PC-9 (cell line): ENCODE measurements at regions of chr6 and their contacts with region 1.

Region 1: DNA sequence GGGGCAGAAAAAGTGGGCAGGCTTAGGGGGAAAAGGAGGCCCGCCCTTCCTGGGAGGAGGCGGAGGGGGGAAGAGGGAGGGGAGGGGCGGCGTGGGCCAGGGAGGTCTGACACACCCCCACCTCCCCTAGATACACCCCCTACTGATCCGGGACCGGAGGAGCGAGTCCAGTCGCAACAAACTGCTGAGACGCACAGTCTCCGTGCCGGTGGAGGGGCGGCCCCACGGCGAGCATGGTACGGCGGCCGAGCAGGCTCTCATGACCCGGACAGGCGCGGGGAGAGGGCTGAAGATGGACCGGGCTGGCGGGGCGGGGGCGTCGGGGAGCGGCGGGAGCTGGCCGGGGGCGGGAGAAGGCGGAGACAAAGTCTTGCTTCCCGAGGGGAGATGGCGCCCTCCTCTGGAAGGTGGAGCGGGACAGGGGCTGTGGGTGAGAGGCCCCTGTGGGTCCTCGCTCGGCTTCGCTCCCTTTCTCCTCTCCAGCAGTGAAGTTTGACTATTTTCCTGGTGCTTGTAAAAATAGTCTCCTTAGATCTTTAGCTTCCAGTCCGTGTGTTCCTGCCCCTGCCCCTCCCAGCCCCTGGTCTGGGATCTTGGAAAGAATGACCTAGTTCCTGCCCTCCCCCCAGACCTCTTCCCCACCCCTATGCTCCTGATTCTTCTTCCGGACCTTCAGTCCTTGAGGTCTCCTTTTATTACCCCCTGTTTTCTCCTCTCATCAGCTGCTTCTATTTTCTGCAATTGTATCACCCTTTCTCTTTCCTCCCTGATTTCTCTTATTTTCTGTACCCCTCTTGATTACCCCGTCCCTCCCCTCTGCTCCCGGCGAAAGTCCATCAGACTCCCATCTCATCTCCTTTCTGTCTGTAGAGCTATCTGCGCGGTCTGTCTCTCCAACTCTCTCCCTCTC is 6.1 kb downstream of the SYNGAP1 start:
- DNase-seq: peak; percentile 66 to 87
- H3K4me3 ChIP-seq: peak overlapping the region; percentile 71
- H3K27ac ChIP-seq: peak overlapping the region; percentile 57
- H3K4me1 ChIP-seq: peaks cover 19% of the 10 kb centered on the region
- H3K27me3 ChIP-seq: peaks cover 21% of the 10 kb centered on the region
- CTCF ChIP-seq: peak; percentile 71

Region 2: GRCh38 chr6:33235221-33235634 is 190.7 kb before region 1 on chr6:
- CTCF ChIA-PET with region 1: no interaction called
- POLR2A ChIA-PET with region 1: no interaction called
- intact Hi-C with region 1: no loop called
- DNase-seq: no peak
- H3K4me3 ChIP-seq: no peak overlapping the region
- H3K27ac ChIP-seq: no peak overlapping the region
- H3K4me1 ChIP-seq: no peaks in the 10 kb centered on the region
- H3K27me3 ChIP-seq: peaks cover 87% of the 10 kb centered on the region
- CTCF ChIP-seq: no peak

Region 3: DNA sequence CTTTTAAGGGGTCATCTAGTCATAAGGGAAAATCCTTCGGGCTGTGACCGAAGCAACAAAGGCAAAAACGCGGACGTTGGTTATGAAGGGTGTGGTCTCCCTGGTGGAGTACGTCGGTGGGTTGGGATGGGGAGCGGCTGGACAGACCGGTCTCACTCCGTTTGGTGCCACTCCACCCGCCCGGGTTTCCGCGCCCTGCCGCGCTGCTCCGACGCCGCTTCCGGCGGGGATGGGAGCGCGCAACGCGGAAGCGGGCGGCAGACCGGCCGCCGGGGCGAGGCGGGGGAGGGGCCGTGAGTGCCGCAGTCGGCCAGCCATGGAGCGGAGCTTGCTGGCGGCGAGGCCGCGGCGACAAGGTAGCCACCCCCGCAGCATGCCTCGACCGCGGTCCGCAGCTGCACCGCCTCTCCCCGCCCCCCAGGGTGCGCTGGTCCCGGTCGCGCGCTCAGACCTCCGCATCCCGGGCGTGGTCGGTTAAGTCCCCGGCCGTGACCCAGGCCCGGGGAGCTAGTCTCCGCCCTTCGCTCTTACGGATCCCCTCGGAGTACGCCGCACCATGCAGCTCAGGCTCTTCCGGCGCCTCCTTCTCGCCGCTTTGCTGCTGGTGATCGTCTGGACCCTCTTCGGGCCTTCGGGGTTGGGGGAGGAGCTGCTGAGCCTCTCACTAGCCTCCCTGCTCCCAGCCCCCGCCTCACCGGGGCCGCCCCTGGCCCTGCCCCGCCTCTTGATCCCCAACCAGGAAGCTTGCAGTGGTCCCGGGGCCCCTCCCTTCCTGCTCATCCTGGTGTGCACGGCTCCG is 148.9 kb before region 1 on chr6 and contains the start of gene B3GALT4:
- CTCF ChIA-PET with region 1: interaction called, 3 read pairs
- POLR2A ChIA-PET with region 1: no interaction called
- intact Hi-C with region 1: loop called (anchors 1 kb)
- DNase-seq: peak; percentile 92 to 93
- H3K4me3 ChIP-seq: peak within 1 kb of the TSS; percentile 70; the same call in 1 of the 2 replicates
- H3K27ac ChIP-seq: peak within 1 kb of the TSS; percentile 79
- H3K4me1 ChIP-seq: peaks cover 36% of the 10 kb centered on the region
- H3K27me3 ChIP-seq: no peaks in the 10 kb centered on the region
- CTCF ChIP-seq: peak; percentile 63
- total RNA-seq, gene B3GALT4: 10.3 and 12.8 TPM in 2 replicates

Region 4: GRCh38 chr6:33344701-33345697 is 80.9 kb before region 1 on chr6:
- CTCF ChIA-PET with region 1: no interaction called
- POLR2A ChIA-PET with region 1: no interaction called
- intact Hi-C with region 1: loop called (anchors 1 kb)
- DNase-seq: peak; percentile 55 to 84
- H3K4me3 ChIP-seq: no peak overlapping the region
- H3K27ac ChIP-seq: peak overlapping the region; percentile 24; the same call in 1 of the 2 replicates
- H3K4me1 ChIP-seq: peaks cover 9% of the 10 kb centered on the region
- H3K27me3 ChIP-seq: no peaks in the 10 kb centered on the region
- CTCF ChIP-seq: peak; percentile 80

Region 5: GRCh38 chr6:33454009-33454946 is 28.4 kb after region 1 on chr6 and contains the start of gene ZBTB9:
- CTCF ChIA-PET with region 1: no interaction called
- POLR2A ChIA-PET with region 1: no interaction called
- intact Hi-C with region 1: loop called (anchors 1 kb)
- DNase-seq: peak; percentile 91 to 95
- H3K4me3 ChIP-seq: peak within 1 kb of the TSS; percentile 95
- H3K27ac ChIP-seq: no peak within 1 kb of the TSS
- H3K4me1 ChIP-seq: peaks cover 6% of the 10 kb centered on the region
- H3K27me3 ChIP-seq: no peaks in the 10 kb centered on the region
- CTCF ChIP-seq: no peak
- total RNA-seq, gene ZBTB9: 7.9 and 8.4 TPM in 2 replicates